ENCODE measurements at regions of chr1 and their contacts with region 1.

Region 1: GRCh38 chr1:24754229-24754628 is 9.0 kb downstream of the CLIC4 start:
- DNase-seq: no peak
- ATAC-seq: no peak
- H3K4me3 ChIP-seq: no peak overlapping the region
- H3K27ac ChIP-seq: no peak overlapping the region
- H3K4me1 ChIP-seq: peaks cover 21% of the 10 kb centered on the region
- H3K27me3 ChIP-seq: no peaks in the 10 kb centered on the region
- CTCF ChIP-seq: no peak
- POLR2A ChIP-seq: no peak
- RAD21 ChIP-seq: no peak

Region 2: GRCh38 chr1:24659993-24660665 is 94.1 kb before region 1 on chr1:
- CTCF ChIA-PET with region 1: interaction called, 3 read pairs
- POLR2A ChIA-PET with region 1: no interaction called
- dilution Hi-C with region 1: loop called (anchors 10 kb)
- in situ Hi-C with region 1: no loop called
- intact Hi-C with region 1: no loop called
- DNase-seq: no peak
- ATAC-seq: no peak
- H3K4me3 ChIP-seq: no peak overlapping the region
- H3K27ac ChIP-seq: no peak overlapping the region
- H3K4me1 ChIP-seq: no peaks in the 10 kb centered on the region; the same call in 1 of the 2 replicates
- H3K27me3 ChIP-seq: no peaks in the 10 kb centered on the region
- CTCF ChIP-seq: no peak
- POLR2A ChIP-seq: no peak
- RAD21 ChIP-seq: no peak

Region 3: DNA sequence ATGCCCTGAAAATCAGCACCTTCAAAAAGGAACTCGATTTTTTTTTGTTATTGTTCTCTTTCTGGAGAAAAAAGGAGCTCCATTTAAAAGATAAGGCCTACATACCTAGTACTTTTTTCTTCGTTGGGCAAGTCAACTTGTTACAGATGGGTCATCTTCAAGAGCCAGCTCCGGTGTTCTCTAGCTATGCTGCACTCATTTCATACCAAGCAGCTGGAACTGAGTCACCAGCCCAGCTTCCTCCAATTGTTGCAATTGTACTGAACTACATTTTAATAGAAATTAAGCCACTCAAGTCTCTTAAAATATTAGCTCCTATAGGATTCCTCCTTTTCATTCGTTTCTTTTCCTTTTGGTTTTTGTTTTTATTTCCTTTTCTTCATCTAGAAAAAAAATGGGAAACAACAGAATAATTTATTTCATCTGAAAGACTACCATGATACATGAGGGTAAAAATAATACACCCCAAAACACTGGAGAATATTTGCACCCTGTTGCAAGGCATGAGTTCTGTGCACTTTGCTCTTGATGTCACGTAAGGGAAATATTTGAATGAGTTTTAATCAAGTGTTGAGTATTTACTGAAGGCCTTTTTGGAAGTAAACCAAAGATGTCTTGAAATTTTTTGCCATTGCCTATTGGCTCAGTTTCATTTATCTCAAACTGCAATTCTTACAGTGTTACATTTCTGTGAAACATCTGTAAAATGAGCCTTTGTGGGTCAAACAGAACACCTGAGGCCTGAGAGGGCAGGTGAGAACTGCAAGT is 51.5 kb after region 1 on chr1:
- CTCF ChIA-PET with region 1: no interaction called
- POLR2A ChIA-PET with region 1: interaction called, 3 read pairs
- dilution Hi-C with region 1: loop called (anchors 10 kb)
- in situ Hi-C with region 1: no loop called
- intact Hi-C with region 1: no loop called
- DNase-seq: peak; percentile 89
- ATAC-seq: peak; percentile 87
- H3K4me3 ChIP-seq: no peak overlapping the region
- H3K27ac ChIP-seq: no peak overlapping the region
- H3K4me1 ChIP-seq: peaks cover 5% of the 10 kb centered on the region
- H3K27me3 ChIP-seq: no peaks in the 10 kb centered on the region
- CTCF ChIP-seq: no peak
- POLR2A ChIP-seq: no peak
- RAD21 ChIP-seq: no peak

Measured in IMR-90 (cell line).